ENCODE measurements at regions of chr5 and their contacts with region 1.

Region 1: GRCh38 chr5:157930710-157931109 is 71.8 kb upstream of the CLINT1 start:
- DNase-seq: no peak
- H3K4me3 ChIP-seq: no peak overlapping the region
- H3K27ac ChIP-seq: no peak overlapping the region
- H3K4me1 ChIP-seq: no peaks in the 10 kb centered on the region
- H3K27me3 ChIP-seq: no peaks in the 10 kb centered on the region
- CTCF ChIP-seq: no peak

Region 2: DNA sequence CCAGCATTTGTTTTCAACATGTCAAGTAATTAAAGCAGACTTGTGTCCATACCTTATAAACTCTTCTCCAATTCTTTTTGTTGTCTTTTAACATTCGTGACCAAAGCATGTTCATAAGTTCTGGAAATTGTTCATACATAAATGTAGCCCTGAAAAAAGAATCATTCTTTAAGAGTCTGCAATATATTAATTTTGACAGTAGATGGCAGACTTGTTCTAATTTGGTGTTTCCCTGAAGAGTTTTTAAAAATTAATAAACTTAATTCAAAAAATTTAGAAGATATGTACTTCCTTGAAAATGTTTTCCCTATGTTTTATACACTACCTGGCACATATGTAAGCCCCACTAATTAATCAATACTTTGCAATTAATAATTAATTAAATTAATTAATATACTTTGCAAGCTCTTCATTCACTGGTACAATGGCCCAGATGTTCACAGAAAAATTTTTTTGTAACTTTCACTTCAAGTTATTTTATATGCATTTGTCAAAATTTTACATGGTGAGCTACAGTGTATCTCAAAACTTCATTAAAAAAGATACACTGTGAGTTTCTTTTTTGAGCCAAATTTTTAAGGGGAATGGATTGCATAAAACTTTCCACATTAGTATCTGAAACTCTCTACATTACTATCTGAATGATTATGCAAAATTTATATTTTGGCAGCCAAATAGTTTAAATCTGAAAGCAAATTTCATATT is 113.9 kb before region 1 on chr5:
- dilution Hi-C with region 1: no loop called
- DNase-seq: no peak
- H3K4me3 ChIP-seq: no peak overlapping the region
- H3K27ac ChIP-seq: no peak overlapping the region
- H3K4me1 ChIP-seq: no peaks in the 10 kb centered on the region
- H3K27me3 ChIP-seq: no peaks in the 10 kb centered on the region
- CTCF ChIP-seq: peak in 1 of 3 experiments; percentile 18

Region 3: DNA sequence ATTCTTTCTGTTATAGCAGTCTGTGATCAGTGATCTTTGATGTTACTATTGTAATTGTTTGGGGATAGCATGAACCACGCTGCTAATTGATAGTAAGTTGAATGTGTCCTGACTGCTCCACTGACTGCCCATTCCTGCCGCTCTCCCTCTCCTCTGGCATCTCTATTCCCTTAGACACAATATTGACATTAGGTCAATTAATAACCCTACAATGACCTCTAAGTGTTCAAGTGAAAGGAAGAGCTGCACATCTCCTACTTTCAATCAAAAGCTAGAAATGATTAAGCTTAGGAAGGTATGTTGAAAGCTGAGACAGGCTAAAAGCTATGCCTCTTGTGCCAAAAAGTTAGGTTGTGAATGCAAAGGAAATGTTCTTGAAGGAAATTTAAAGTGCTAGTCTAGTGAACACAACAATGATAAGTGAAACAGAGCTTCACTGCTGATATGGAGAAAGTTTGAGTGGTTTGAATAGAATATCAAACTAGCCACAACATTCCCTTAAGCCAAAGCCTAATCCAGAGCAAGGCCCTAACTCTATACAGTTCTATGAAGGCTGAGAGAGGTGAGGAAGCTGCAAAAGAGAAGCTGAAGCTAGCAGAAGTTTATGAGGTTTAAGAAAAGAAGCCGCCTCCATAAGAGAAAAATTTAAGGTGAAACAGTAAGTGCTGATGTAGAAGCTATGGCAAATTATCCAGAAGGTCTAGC is 84.7 kb before region 1 on chr5:
- dilution Hi-C with region 1: loop called (anchors 5 kb)
- DNase-seq: no peak
- H3K4me3 ChIP-seq: no peak overlapping the region
- H3K27ac ChIP-seq: no peak overlapping the region
- H3K4me1 ChIP-seq: no peaks in the 10 kb centered on the region
- H3K27me3 ChIP-seq: no peaks in the 10 kb centered on the region
- CTCF ChIP-seq: no peak

Region 4: GRCh38 chr5:158292981-158293380 is 362.3 kb after region 1 on chr5:
- dilution Hi-C with region 1: no loop called
- DNase-seq: no peak
- H3K4me3 ChIP-seq: no peak overlapping the region
- H3K27ac ChIP-seq: no peak overlapping the region
- H3K4me1 ChIP-seq: no peaks in the 10 kb centered on the region
- H3K27me3 ChIP-seq: no peaks in the 10 kb centered on the region
- CTCF ChIP-seq: no peak

Measured in keratinocyte (primary cell).